A673 (cell line): ENCODE measurements at regions of chr6 and their contacts with region 1.

Region 1: DNA sequence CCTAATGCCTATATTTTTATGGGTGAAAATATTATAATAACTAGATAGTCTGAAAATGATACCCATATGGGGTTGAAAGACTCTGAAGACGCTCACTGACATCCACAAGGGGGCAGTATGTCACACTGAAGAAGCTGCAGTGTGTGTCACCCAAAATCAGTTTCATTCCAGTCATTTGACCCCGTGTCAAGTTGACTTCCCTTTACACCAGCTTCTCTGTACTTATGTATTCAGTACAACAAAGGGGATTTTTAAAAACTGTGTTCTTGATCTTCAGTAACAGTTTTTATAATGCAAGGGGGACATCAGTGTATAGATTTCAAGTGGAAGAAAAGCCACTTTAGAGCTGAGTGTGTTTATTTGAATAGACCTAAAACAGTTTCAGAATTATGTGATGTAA is 19.3 kb downstream of the FAXC start:
- DNase-seq: peak; percentile 80
- H3K4me3 ChIP-seq: no peak overlapping the region
- H3K27ac ChIP-seq: no peak overlapping the region
- H3K4me1 ChIP-seq: no peaks in the 10 kb centered on the region
- H3K27me3 ChIP-seq: no peaks in the 10 kb centered on the region
- CTCF ChIP-seq: peak; percentile 86

Region 2: DNA sequence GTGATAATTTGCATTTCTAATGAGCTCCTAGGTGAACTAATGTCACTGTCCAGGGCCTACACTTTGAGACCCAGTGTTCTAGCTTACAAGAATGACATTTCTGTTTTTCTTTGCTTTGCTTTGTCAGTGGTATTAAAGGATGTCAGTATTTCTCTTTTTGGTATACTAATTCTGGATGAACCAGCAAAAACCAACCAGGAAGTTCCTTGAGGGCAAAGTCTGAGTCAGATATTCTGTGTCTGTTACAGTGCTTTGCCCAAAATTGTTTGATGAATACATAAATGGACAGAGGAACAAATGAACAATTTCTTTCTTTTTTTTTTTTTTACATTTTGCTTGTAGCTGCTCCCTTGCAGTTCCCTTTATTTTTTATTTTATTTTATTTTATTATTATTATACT is 48.5 kb after region 1 on chr6:
- CTCF ChIA-PET with region 1: no interaction called
- POLR2A ChIA-PET with region 1: no interaction called
- intact Hi-C with region 1: no loop called
- DNase-seq: no peak
- H3K4me3 ChIP-seq: no peak overlapping the region
- H3K27ac ChIP-seq: no peak overlapping the region
- H3K4me1 ChIP-seq: no peaks in the 10 kb centered on the region
- H3K27me3 ChIP-seq: no peaks in the 10 kb centered on the region
- CTCF ChIP-seq: no peak

Region 3: GRCh38 chr6:99393698-99394531 is 63.8 kb after region 1 on chr6 and contains the start of gene COQ3:
- CTCF ChIA-PET with region 1: no interaction called
- POLR2A ChIA-PET with region 1: no interaction called
- intact Hi-C with region 1: loop called (anchors 5 kb)
- DNase-seq: peak; percentile 89
- H3K4me3 ChIP-seq: peak within 1 kb of the TSS; percentile 79
- H3K27ac ChIP-seq: peak within 1 kb of the TSS; percentile 94
- H3K4me1 ChIP-seq: peaks cover 3% of the 10 kb centered on the region
- H3K27me3 ChIP-seq: no peaks in the 10 kb centered on the region
- CTCF ChIP-seq: no peak
- total RNA-seq, gene COQ3: 15.9 and 21.7 TPM in 2 replicates

Region 4: DNA sequence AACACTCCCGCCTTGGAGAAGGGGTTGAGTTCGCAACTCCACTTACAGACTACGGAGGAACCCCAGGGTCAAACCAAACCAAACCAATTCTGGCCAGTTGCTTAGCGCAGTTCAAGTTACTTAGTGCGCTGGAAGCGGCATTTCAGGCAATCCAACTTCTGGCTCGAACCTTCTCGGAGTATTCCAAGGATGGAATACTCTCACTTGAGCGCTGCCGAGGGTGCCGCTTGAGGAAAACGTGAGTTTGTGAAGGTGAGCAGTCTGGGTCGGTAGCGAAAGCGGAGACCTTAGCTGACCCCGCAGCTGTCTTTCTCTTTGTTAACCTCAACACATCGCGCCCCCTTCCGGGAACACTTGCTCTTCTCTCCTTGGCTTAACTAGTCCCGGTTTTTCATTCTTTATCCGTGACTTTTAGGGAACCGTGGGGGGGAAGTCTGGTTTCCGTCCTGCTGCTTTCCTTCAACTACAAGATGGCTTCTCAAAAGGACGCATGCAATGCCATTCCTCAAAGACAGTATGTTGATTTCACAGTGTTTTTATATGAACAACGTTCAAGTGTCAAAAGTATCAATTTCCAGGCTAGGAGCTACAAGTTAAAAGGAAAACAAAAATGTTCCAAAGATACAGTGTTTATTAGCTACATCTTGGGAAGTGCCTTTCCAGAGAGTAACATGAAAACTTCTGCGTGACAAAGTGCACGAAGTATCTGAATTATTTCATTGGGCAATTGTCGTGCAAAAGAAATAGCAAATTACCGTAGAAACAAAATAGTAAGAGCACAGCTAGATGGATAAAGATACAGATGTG is 95.7 kb after region 1 on chr6:
- CTCF ChIA-PET with region 1: interaction called, 3 read pairs
- POLR2A ChIA-PET with region 1: no interaction called
- intact Hi-C with region 1: loop called (anchors 10 kb)
- DNase-seq: peak; percentile 89
- H3K4me3 ChIP-seq: peak overlapping the region; percentile 82
- H3K27ac ChIP-seq: peak overlapping the region; percentile 98
- H3K4me1 ChIP-seq: peaks cover 46% of the 10 kb centered on the region
- H3K27me3 ChIP-seq: no peaks in the 10 kb centered on the region
- CTCF ChIP-seq: peak; percentile 43